Endothelial cell of umbilical vein (primary cell): ENCODE measurements at regions of chr3 and their contacts with region 1.

Region 1: GRCh38 chr3:33787328-33788009 is 11.0 kb upstream of the PDCD6IP start:
- DNase-seq: peak; percentile 71
- H3K4me3 ChIP-seq: peak overlapping the region; percentile 7 to 17 (median 8)
- H3K27ac ChIP-seq: no peak overlapping the region
- H3K4me1 ChIP-seq: peaks cover 4% of the 10 kb centered on the region
- H3K27me3 ChIP-seq: no peaks in the 10 kb centered on the region
- CTCF ChIP-seq: peak; percentile 73 to 74
- POLR2A ChIP-seq: no peak

Region 2: GRCh38 chr3:32947789-32948238 is 839.7 kb before region 1 on chr3:
- CTCF ChIA-PET with region 1: interaction called, 40 read pairs
- POLR2A ChIA-PET with region 1: no interaction called
- dilution Hi-C with region 1: no loop called
- intact Hi-C with region 1: loop called (anchors 1 kb)
- DNase-seq: peak; percentile 85
- H3K4me3 ChIP-seq: no peak overlapping the region
- H3K27ac ChIP-seq: no peak overlapping the region
- H3K4me1 ChIP-seq: peaks cover 5% of the 10 kb centered on the region
- H3K27me3 ChIP-seq: no peaks in the 10 kb centered on the region
- CTCF ChIP-seq: peak; percentile 73 to 84
- POLR2A ChIP-seq: no peak

Region 3: DNA sequence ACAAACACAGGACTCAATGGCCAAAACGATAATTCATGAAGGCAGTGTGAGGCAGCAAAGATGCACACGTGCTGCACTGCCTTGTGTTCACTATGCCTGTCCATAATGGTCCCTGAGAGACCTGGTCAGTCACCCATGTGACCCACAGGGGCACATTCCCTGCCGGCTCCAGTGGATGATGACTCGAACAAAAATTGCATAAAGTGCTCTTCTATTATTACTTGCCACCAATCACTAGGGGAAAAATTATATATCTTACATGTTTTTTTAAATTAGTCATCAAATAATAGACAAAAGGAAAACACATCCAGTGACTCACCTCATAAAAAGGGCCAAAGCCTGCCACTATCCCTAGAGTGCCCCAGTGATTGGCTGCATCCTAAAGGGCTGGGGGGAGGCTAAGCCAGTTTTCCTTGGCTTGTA is 394.8 kb before region 1 on chr3:
- CTCF ChIA-PET with region 1: interaction called, 5 read pairs
- POLR2A ChIA-PET with region 1: no interaction called
- dilution Hi-C with region 1: no loop called
- intact Hi-C with region 1: loop called (anchors 1 kb)
- DNase-seq: peak; percentile 92
- H3K4me3 ChIP-seq: no peak overlapping the region
- H3K27ac ChIP-seq: peak overlapping the region; percentile 77
- H3K4me1 ChIP-seq: peaks cover 46% of the 10 kb centered on the region
- H3K27me3 ChIP-seq: no peaks in the 10 kb centered on the region
- CTCF ChIP-seq: no peak
- POLR2A ChIP-seq: no peak

Region 4: GRCh38 chr3:33629219-33629618 is 158.2 kb before region 1 on chr3:
- CTCF ChIA-PET with region 1: interaction called, 38 read pairs
- POLR2A ChIA-PET with region 1: no interaction called
- dilution Hi-C with region 1: no loop called
- intact Hi-C with region 1: no loop called
- DNase-seq: no peak
- H3K4me3 ChIP-seq: no peak overlapping the region
- H3K27ac ChIP-seq: no peak overlapping the region
- H3K4me1 ChIP-seq: no peaks in the 10 kb centered on the region
- H3K27me3 ChIP-seq: no peaks in the 10 kb centered on the region
- CTCF ChIP-seq: no peak
- POLR2A ChIP-seq: no peak

Region 5: DNA sequence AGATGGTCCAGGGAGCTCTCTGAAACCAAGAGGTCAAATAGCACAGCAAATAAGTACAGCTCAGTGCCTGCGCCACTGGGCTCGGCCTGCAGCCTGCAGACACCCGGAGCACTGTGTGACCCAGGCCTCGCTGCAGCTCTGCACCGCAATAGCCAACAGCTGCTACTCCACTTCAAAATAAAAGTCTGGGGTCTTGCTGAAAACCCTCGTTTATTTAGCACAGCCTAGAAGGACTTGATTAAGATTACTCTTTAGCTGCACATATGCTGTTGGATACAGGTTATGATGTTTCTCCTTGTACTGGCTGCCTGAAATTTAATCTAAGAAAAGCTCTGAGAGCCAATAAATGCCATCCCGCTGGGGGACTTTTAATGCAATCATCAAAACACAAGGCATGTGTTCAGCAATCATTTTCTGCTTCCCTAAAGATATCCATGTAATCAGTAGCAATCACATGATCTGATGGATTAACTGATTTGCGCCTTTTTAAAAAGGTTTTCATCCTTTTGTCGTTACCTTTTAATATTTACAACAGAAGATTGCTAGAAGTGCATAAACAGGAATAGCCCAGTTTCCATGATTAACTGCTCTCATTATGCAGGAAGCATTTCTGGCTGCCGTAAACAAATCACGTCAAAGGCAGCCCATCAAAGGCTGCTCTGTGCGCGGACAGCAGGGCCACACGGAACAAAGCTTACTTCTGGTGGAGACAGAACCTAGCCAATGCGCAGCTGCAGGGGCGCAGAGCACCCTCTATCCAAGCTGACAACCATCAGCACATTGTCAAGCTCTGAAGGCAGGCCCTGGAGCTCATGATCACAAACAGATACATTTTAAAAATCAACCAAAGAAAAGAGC is 128.2 kb before region 1 on chr3:
- CTCF ChIA-PET with region 1: interaction called, 10 read pairs
- POLR2A ChIA-PET with region 1: no interaction called
- dilution Hi-C with region 1: no loop called
- intact Hi-C with region 1: no loop called
- DNase-seq: peak; percentile 89
- H3K4me3 ChIP-seq: peak overlapping the region; percentile 7 to 57 (median 11)
- H3K27ac ChIP-seq: peak overlapping the region; percentile 39
- H3K4me1 ChIP-seq: peaks cover 36% of the 10 kb centered on the region
- H3K27me3 ChIP-seq: no peaks in the 10 kb centered on the region
- CTCF ChIP-seq: no peak
- POLR2A ChIP-seq: no peak

Region 6: GRCh38 chr3:33798411-33799201 is 11.1 kb after region 1 on chr3 and contains the start of gene PDCD6IP:
- CTCF ChIA-PET with region 1: interaction called, 39 read pairs
- POLR2A ChIA-PET with region 1: no interaction called
- dilution Hi-C with region 1: no loop called
- intact Hi-C with region 1: no loop called
- DNase-seq: peak; percentile 96
- H3K4me3 ChIP-seq: peak within 1 kb of the TSS; percentile 78 to 95 (median 91)
- H3K27ac ChIP-seq: peak within 1 kb of the TSS; percentile 78
- H3K4me1 ChIP-seq: peaks cover 24% of the 10 kb centered on the region
- H3K27me3 ChIP-seq: no peaks in the 10 kb centered on the region
- CTCF ChIP-seq: no peak
- POLR2A ChIP-seq: peak; percentile 99
- total RNA-seq, gene PDCD6IP: 265 and 268 TPM in 2 replicates

Region 7: GRCh38 chr3:33919312-33920120 is 132.0 kb after region 1 on chr3:
- CTCF ChIA-PET with region 1: no interaction called
- POLR2A ChIA-PET with region 1: no interaction called
- dilution Hi-C with region 1: no loop called
- intact Hi-C with region 1: no loop called
- DNase-seq: no peak
- H3K4me3 ChIP-seq: no peak overlapping the region
- H3K27ac ChIP-seq: no peak overlapping the region
- H3K4me1 ChIP-seq: no peaks in the 10 kb centered on the region
- H3K27me3 ChIP-seq: no peaks in the 10 kb centered on the region
- CTCF ChIP-seq: no peak
- POLR2A ChIP-seq: no peak